ENCODE measurements at regions of chr10 and their contacts with region 1.

Region 1: DNA sequence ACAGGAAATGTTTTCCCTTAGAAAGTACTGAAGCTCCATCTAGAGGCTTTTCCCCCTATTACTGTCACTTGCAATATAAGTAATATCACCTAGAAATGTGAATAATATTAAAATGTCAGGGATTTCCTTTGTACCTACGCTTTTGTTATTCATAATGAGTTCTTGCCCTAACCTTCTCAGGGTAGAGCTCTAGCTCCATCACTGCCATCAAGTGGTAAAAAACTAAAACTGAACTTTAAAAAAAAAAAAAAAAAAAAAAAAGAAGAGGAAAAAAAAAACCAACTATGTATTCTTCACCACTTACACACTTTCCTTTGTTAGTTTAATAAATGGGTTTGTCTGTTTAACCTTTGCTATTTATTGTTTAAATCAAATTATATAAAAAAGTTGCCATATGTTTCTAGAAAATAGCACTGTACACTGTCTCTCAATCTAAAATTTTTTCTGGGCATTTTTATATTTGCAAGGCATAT is 49.9 kb downstream of the DNAJC1 start:
- DNase-seq: no peak
- H3K4me3 ChIP-seq: no peak overlapping the region
- H3K27ac ChIP-seq: no peak overlapping the region
- H3K4me1 ChIP-seq: peaks cover 0 to 19% of the 10 kb centered on the region in 2 donors
- H3K27me3 ChIP-seq: no peaks in the 10 kb centered on the region
- CTCF ChIP-seq: peak; percentile 15 to 53 (median 38)
- POLR2A ChIP-seq: no peak

Region 2: GRCh38 chr10:21278491-21279239 is 675.0 kb before region 1 on chr10:
- intact Hi-C with region 1: loop called in 1 of 2 experiments (anchors 10 kb)
- DNase-seq: peak; percentile 95 to 99 (median 99)
- H3K4me3 ChIP-seq: no peak overlapping the region
- H3K27ac ChIP-seq: no peak overlapping the region
- H3K4me1 ChIP-seq: peaks cover 0 to 4% of the 10 kb centered on the region in 2 donors
- H3K27me3 ChIP-seq: no peaks in the 10 kb centered on the region
- CTCF ChIP-seq: peak; percentile 87 to 93 (median 90)
- POLR2A ChIP-seq: no peak

Region 3: DNA sequence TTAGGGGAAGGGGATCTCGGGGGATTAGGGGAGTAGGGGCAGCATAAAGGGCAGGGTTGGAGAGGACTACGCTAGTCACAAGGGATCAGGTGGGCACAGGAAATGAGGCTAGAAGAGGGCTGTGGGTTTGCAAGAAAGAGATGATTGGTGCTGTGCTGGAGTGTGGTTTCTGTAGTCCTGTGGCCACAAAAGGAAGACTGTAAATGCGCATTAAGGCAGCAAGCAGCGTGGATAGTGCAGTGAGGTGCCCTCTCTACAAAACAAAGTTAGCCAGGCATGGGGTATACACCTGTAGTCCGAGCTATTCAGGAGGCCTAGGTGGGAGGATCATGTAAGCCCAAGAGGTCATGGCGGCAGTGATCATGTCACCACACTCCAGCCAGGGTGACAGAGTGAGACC is 207.5 kb before region 1 on chr10:
- intact Hi-C with region 1: loop called in 1 of 2 experiments (anchors 10 kb)
- DNase-seq: no peak
- H3K4me3 ChIP-seq: no peak overlapping the region
- H3K27ac ChIP-seq: no peak overlapping the region
- H3K4me1 ChIP-seq: no peaks in the 10 kb centered on the region
- H3K27me3 ChIP-seq: no peaks in the 10 kb centered on the region
- CTCF ChIP-seq: no peak
- POLR2A ChIP-seq: no peak

Region 4: GRCh38 chr10:22029445-22030236 is 76.0 kb after region 1 on chr10:
- intact Hi-C with region 1: no loop called
- DNase-seq: no peak
- H3K4me3 ChIP-seq: no peak overlapping the region
- H3K27ac ChIP-seq: no peak overlapping the region
- H3K4me1 ChIP-seq: no peaks in the 10 kb centered on the region
- H3K27me3 ChIP-seq: no peaks in the 10 kb centered on the region
- CTCF ChIP-seq: no peak
- POLR2A ChIP-seq: no peak

Measured in adrenal gland (tissue), 19 donors.